WTC11 (cell line): ENCODE measurements at regions of chr1 and their contacts with region 1.

Region 1: GRCh38 chr1:240199758-240200645 is 108.3 kb downstream of the FMN2 start:
- DNase-seq: no peak
- ATAC-seq: no peak
- H3K4me3 Mint-ChIP-seq: no peak overlapping the region
- H3K27ac Mint-ChIP-seq: no peak overlapping the region
- H3K4me1 Mint-ChIP-seq: no peaks in the 10 kb centered on the region
- H3K27me3 Mint-ChIP-seq: no peaks in the 10 kb centered on the region
- CTCF ChIP-seq: no peak

Region 2: DNA sequence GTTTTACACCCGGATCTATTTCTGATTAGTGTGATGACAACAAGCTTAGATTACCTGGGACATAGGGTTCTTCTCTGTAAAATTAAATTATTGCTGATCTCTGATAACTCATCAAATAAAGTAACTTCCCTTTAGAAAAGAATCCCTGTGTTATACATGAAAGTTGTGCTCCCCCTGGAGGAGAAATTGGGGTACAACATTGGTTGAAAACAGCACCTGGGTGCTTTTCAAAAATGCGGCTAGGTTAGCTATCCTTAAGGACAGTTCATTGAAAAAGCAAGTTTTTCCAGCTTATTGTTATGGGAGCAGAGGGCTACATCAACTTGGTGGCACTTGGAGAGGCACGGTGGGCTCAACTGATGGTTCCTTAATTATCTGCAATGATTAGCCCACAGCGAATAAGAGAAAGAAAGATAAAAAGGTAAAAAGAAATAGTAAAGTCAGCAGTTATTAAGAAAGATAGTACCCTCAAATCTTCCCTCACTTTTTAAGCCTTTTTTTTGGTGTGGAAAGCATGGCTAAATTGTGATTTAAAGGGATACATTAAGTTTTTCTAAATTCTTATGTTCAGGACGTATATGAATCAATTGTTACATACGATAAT is 10.5 kb before region 1 on chr1:
- CTCF ChIA-PET with region 1: interaction called, 15 read pairs
- POLR2A ChIA-PET with region 1: no interaction called
- DNase-seq: peak; percentile 38
- ATAC-seq: peak; percentile 66
- H3K4me3 Mint-ChIP-seq: no peak overlapping the region
- H3K27ac Mint-ChIP-seq: no peak overlapping the region
- H3K4me1 Mint-ChIP-seq: peaks cover 15% of the 10 kb centered on the region
- H3K27me3 Mint-ChIP-seq: no peaks in the 10 kb centered on the region
- CTCF ChIP-seq: peak; percentile 58

Region 3: DNA sequence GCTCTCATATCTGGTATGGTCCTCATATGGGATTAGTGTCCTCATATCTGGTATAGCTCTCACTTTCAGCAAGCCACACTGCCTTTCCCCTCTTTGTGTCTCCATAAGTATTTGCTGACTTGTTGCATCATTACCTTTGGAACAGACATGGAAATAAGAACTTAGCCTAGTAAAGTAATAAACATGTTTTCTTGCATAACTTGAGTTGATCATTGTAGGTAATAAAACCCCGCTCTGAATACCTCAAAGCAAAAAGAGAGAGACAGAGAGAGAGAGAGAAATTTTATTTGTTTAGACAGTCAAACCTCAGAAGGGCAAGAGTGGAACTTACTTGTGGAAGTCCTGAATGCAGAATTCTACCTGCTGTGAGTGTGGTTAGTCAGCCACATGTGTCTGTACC is 241.7 kb after region 1 on chr1:
- CTCF ChIA-PET with region 1: no interaction called
- POLR2A ChIA-PET with region 1: no interaction called
- DNase-seq: no peak
- ATAC-seq: no peak
- H3K4me3 Mint-ChIP-seq: no peak overlapping the region
- H3K27ac Mint-ChIP-seq: no peak overlapping the region
- H3K4me1 Mint-ChIP-seq: no peaks in the 10 kb centered on the region
- H3K27me3 Mint-ChIP-seq: no peaks in the 10 kb centered on the region
- CTCF ChIP-seq: no peak